ENCODE measurements at regions of chr14 and their contacts with region 1.

Region 1: DNA sequence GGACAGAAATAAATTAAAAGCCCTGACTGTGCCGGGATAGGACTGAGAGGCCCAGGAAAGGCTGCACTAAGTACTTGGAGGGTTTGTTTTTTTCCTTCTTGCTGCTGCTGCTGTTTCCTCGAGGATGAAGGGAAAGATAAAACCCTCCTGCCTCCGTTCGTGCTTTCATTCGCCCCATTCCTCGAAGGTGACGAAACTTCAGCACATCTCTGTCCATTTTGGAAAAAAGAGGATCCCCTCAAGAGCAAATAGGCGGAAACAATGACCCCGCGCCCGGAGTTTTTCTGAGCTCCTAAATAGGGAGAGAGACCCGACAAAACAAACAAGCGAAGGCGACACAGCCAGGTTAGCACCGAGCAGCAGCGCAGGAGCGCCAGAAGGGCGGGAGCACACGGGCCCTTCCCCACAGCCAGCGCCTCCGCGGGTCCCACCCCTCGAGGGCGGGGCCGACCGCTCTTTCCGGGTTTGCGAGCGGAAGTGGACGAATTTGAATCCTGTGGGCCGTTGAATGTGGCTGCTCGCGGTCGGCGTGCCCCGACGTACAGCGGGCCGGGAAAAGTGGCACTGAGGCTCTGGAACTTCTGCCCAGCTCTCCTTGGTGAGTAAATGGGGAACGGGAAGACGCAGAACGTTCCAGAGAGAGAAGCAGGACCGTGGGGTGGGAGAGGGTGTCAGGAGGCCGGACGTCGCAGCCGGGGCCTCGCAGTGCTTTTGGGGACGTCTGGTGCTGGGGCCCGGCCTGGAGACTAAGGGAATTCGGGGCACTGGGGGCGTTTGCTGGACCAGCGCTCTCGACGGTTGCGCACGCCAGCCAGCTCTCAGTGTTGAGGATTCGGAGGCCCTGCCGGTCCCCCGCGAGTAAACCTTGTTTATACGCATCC is at the start of gene G2E3:
- DNase-seq: peak; percentile 75 to 91 (median 85)
- ATAC-seq: peak; percentile 100
- H3K4me3 ChIP-seq: peak within 1 kb of the TSS; percentile 76
- H3K4me3 Mint-ChIP-seq: peak within 1 kb of the TSS; percentile 97 to 100 (median 99)
- H3K27ac ChIP-seq: peak within 1 kb of the TSS; percentile 77
- H3K27ac Mint-ChIP-seq: peak within 1 kb of the TSS; percentile 93 to 100 (median 98)
- H3K4me1 ChIP-seq: peaks cover 5 to 12% of the 10 kb centered on the region in 2 donors
- H3K4me1 Mint-ChIP-seq: peaks cover 24 to 43% (median 28%) of the 10 kb centered on the region in 7 donors
- H3K27me3 ChIP-seq: no peaks in the 10 kb centered on the region
- H3K27me3 Mint-ChIP-seq: peaks cover 0 to 4% (median 0%) of the 10 kb centered on the region in 5 donors
- total RNA-seq, gene G2E3: 25.0 to 29.7 (median 28.6) TPM

Region 2: GRCh38 chr14:30521899-30522736 is 36.8 kb before region 1 on chr14:
- CTCF ChIA-PET with region 1: interaction called, 5 read pairs
- POLR2A ChIA-PET with region 1: no interaction called
- intact Hi-C with region 1: loop called in 1 of 2 experiments (anchors 1 kb)
- DNase-seq: peak in 6 of 9 donors; percentile 4 to 55 (median 36)
- ATAC-seq: peak; percentile 70
- H3K4me3 ChIP-seq: no peak overlapping the region
- H3K4me3 Mint-ChIP-seq: peak overlapping the region in 7 of 10 donors; percentile 2 to 59 (median 26)
- H3K27ac ChIP-seq: no peak overlapping the region
- H3K27ac Mint-ChIP-seq: peak overlapping the region in 7 of 9 donors; percentile 6 to 78 (median 43)
- H3K4me1 ChIP-seq: peaks cover 4 to 7% of the 10 kb centered on the region in 2 donors
- H3K4me1 Mint-ChIP-seq: peaks cover 2 to 17% (median 11%) of the 10 kb centered on the region in 7 donors
- H3K27me3 ChIP-seq: no peaks in the 10 kb centered on the region
- H3K27me3 Mint-ChIP-seq: no peaks in the 10 kb centered on the region

Region 3: DNA sequence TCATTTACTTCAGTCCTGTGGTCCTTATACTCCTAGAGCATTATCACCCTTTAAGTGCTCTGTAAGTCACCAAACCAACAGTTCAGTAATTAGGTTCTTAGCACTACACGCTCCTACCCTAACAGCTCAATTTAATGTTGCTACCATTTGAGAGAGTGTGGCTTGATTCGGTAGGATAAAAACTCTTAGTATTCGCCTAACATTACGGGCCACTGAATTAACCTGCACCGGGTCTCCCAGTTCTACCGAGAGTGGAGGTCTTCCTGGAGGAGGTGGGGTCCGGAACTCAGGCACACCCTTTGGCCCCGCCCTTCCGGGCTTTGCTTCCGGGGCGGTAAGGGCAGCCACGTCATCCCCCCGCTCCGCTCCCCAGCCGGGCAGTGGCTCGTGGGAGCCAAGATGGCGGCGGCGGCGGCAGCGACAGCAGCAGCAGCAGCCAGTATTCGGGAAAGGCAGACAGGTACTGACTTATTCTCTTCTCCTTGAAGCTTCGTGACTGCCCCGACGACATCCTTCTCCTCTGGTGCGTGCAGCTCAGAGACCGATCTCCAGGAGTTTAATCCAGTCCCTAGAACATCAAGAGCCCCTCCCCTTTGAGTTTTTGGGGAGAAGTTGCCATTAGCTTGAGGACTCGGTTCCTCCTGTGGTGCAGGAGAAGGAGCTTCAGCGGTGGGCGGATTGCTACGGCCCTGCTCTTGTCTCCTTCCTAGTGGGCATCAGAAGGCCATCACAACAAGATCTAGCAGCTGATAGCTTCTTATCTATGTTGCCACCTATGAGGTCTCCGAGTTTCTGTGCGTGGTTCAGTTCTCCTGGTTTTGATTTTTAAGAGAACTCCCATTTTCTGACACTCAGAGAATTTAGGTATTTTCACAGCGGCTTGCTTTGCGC is 63.3 kb after region 1 on chr14 and contains the start of gene SCFD1:
- CTCF ChIA-PET with region 1: no interaction called
- POLR2A ChIA-PET with region 1: interaction called, 17 read pairs
- intact Hi-C with region 1: loop called (anchors 1 kb)
- DNase-seq: peak; percentile 86 to 94 (median 91)
- ATAC-seq: peak; percentile 99
- H3K4me3 ChIP-seq: peak within 1 kb of the TSS; percentile 97
- H3K4me3 Mint-ChIP-seq: peak within 1 kb of the TSS; percentile 95 to 100 (median 97)
- H3K27ac ChIP-seq: peak within 1 kb of the TSS; percentile 86
- H3K27ac Mint-ChIP-seq: peak within 1 kb of the TSS; percentile 86 to 98 (median 95)
- H3K4me1 ChIP-seq: peaks cover 14 to 26% of the 10 kb centered on the region in 2 donors
- H3K4me1 Mint-ChIP-seq: peaks cover 14 to 58% (median 44%) of the 10 kb centered on the region in 7 donors
- H3K27me3 ChIP-seq: no peaks in the 10 kb centered on the region
- H3K27me3 Mint-ChIP-seq: no peaks in the 10 kb centered on the region
- total RNA-seq, gene SCFD1: 63.2 to 75.4 (median 68.2) TPM

Region 4: GRCh38 chr14:31420319-31421111 is 861.6 kb after region 1 on chr14 and contains the start of gene HEATR5A:
- CTCF ChIA-PET with region 1: no interaction called
- POLR2A ChIA-PET with region 1: no interaction called
- intact Hi-C with region 1: loop called (anchors 1 to 10 kb)
- DNase-seq: peak; percentile 84 to 93 (median 90)
- ATAC-seq: peak; percentile 99
- H3K4me3 ChIP-seq: peak within 1 kb of the TSS; percentile 99
- H3K4me3 Mint-ChIP-seq: peak within 1 kb of the TSS; percentile 94 to 99 (median 98)
- H3K27ac ChIP-seq: peak within 1 kb of the TSS; percentile 83
- H3K27ac Mint-ChIP-seq: peak within 1 kb of the TSS; percentile 82 to 97 (median 92)
- H3K4me1 ChIP-seq: peaks cover 6 to 8% of the 10 kb centered on the region in 2 donors
- H3K4me1 Mint-ChIP-seq: peaks cover 20 to 35% (median 25%) of the 10 kb centered on the region in 7 donors
- H3K27me3 ChIP-seq: no peaks in the 10 kb centered on the region
- H3K27me3 Mint-ChIP-seq: peaks cover 0 to 7% (median 0%) of the 10 kb centered on the region in 5 donors
- total RNA-seq, gene HEATR5A: 7.7 to 14.4 (median 13.2) TPM

Region 5: DNA sequence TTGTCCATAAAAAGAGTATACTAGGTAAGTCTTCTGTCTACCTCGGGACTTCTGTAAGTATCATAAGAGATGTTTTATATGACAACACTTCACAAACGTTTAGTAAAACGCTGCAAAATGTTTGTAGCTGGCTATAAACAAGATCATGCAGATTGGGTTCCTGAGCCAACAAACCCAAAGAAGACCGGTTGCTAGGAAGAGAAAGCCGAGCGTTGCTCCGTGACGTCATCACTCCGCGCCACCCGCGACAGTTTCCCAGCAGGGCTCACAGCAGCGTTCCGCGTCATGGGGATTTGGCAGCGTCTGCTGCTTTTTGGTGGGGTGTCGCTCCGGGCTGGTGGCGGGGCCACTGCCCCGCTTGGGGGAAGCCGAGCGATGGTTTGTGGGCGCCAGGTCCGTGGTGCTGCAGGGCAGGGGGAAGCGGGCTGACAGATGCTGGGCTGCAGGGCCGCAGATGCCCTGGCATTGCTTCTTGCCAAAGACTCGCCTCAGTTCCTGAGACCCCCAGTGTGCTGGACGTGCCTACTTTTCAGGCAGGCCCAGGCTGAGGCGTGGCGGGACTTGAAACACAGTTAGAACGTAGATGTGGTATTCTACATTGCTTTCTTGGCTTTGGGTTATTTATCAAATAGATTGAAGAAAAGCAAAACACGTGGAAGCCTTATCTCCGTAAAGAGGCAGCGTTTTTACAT is 1002.4 kb after region 1 on chr14 and contains the start of gene NUBPL:
- CTCF ChIA-PET with region 1: no interaction called
- POLR2A ChIA-PET with region 1: no interaction called
- intact Hi-C with region 1: loop called in 1 of 2 experiments (anchors 1 kb)
- DNase-seq: peak; percentile 96 to 98 (median 97)
- ATAC-seq: peak; percentile 95
- H3K4me3 ChIP-seq: peak within 1 kb of the TSS; percentile 90
- H3K4me3 Mint-ChIP-seq: peak within 1 kb of the TSS; percentile 88 to 98 (median 96)
- H3K27ac ChIP-seq: peak within 1 kb of the TSS; percentile 81
- H3K27ac Mint-ChIP-seq: peak within 1 kb of the TSS; percentile 95 to 100 (median 99)
- H3K4me1 ChIP-seq: peaks cover 0 to 5% of the 10 kb centered on the region in 2 donors
- H3K4me1 Mint-ChIP-seq: peaks cover 24 to 44% (median 38%) of the 10 kb centered on the region in 7 donors
- H3K27me3 ChIP-seq: no peaks in the 10 kb centered on the region
- H3K27me3 Mint-ChIP-seq: peaks cover 0 to 11% (median 5%) of the 10 kb centered on the region in 5 donors
- total RNA-seq, gene NUBPL: 6.1 to 11.7 (median 8.3) TPM

Measured in naive thymus-derived CD4-positive, alpha-beta T cell (primary cell).